ENCODE measurements at regions of chr4 and their contacts with region 1.

Region 1: GRCh38 chr4:101155368-101155767 is 192.0 kb downstream of the PPP3CA start:
- DNase-seq: no peak
- H3K4me3 Mint-ChIP-seq: no peak overlapping the region
- H3K27ac Mint-ChIP-seq: no peak overlapping the region
- H3K4me1 Mint-ChIP-seq: peaks cover 22% of the 10 kb centered on the region
- H3K27me3 Mint-ChIP-seq: no peaks in the 10 kb centered on the region

Region 2: GRCh38 chr4:100823066-100823992 is 332.0 kb before region 1 on chr4:
- intact Hi-C with region 1: loop called (anchors 1 kb)
- DNase-seq: peak; percentile 65
- H3K4me3 Mint-ChIP-seq: no peak overlapping the region
- H3K27ac Mint-ChIP-seq: peak overlapping the region; percentile 86
- H3K4me1 Mint-ChIP-seq: peaks cover 19% of the 10 kb centered on the region
- H3K27me3 Mint-ChIP-seq: no peaks in the 10 kb centered on the region

Measured in activated CD4-positive, alpha-beta T cell treated with anti-CD3 and anti-CD28 coated beads, Interleukin-2, amount 10 ng/mL, durations not matched to agents 24 days and 14 days (primary cell).